Panc1 (cell line): ENCODE measurements at regions of chr9 and their contacts with region 1.

Region 1: DNA sequence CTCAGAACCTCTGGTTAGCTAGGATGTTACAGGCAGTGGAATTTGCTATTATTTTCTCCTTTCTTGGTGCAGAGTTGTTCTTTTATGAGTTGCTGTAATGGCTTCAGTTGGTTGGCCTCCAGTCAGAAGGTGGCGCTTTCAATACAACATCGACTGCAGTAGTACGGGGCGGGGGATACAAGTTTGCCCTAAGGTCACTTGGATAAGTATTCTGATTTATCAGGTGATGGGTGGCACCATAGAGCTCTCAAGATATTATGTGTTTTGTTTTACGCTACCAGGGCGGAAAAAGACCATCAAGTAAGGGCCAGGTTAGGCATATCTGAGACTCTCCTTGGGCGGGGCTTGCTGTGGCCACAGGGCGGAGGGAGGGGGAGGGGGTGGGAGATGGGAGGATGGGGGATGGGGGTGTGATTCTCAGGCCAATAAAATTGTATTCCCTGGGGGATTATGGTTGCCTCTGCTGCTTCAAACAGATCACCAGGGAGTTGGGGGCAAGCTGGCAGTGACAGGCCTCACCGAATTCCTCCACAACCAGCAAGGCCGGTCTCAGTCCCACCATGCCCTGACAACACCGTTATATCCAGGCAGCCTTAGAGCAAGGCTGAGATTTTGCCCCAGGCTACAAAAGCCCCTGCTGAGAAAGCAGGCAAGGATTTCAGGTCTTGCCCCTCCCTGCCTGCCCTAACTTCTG is 15.9 kb upstream of the RNF38 start:
- DNase-seq: no peak
- ATAC-seq: no peak
- H3K4me3 ChIP-seq: no peak overlapping the region
- H3K27ac ChIP-seq: no peak overlapping the region
- H3K4me1 ChIP-seq: peaks cover 24% of the 10 kb centered on the region
- H3K27me3 ChIP-seq: no peaks in the 10 kb centered on the region
- CTCF ChIP-seq: no peak

Region 2: DNA sequence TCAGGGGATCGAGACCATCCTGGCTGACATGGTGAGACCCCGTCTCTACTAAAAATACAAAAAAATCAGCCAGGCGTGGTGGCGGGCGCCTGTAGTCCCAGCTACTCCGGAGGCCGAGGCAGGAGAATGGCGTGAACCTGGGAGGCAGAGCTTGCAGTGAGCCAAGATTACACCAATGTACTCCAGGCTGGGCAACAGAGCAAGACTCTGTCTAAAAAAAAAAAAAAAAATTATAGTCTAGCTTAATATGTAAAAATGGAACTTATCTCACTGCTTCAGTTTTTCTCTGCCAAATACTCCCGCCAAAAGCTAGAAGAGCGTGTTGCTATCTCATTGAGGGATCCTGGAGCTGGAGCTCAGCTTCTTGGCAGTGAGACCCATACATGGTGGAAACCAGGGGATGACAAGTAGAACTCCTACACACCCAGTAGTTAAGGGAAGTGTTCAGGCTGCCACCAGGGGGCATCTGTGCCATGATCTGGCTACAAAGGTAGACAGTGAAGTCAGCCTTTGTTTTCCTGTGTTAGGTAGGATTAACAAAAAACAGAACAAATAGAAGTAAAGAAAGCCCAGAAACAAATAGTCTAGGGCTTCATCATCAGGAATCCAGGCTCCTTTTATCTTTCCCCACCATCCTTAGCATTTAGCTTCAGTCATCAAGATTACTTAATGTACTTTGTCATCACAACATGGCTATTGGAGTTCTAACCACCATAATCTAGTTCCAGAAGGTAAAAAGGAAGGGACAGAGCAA is 313.1 kb before region 1 on chr9:
- CTCF ChIA-PET with region 1: no interaction called
- POLR2A ChIA-PET with region 1: interaction called, 10 read pairs
- in situ Hi-C with region 1: no loop called
- intact Hi-C with region 1: no loop called
- DNase-seq: peak; percentile 69
- ATAC-seq: peak; percentile 95
- H3K4me3 ChIP-seq: no peak overlapping the region
- H3K27ac ChIP-seq: no peak overlapping the region
- H3K4me1 ChIP-seq: peaks cover 3% of the 10 kb centered on the region; the same call in 1 of the 2 replicates
- H3K27me3 ChIP-seq: no peaks in the 10 kb centered on the region
- CTCF ChIP-seq: peak; percentile 98

Region 3: GRCh38 chr9:36436909-36437308 is 20.9 kb after region 1 on chr9:
- CTCF ChIA-PET with region 1: interaction called, 3 read pairs
- POLR2A ChIA-PET with region 1: no interaction called
- in situ Hi-C with region 1: no loop called
- intact Hi-C with region 1: loop called (anchors 2 kb)
- DNase-seq: no peak
- ATAC-seq: no peak
- H3K4me3 ChIP-seq: no peak overlapping the region
- H3K27ac ChIP-seq: no peak overlapping the region
- H3K4me1 ChIP-seq: no peaks in the 10 kb centered on the region
- H3K27me3 ChIP-seq: no peaks in the 10 kb centered on the region
- CTCF ChIP-seq: no peak

Region 4: GRCh38 chr9:36566813-36567221 is 150.8 kb after region 1 on chr9:
- CTCF ChIA-PET with region 1: no interaction called
- POLR2A ChIA-PET with region 1: interaction called, 10 read pairs
- in situ Hi-C with region 1: no loop called
- intact Hi-C with region 1: no loop called
- DNase-seq: no peak
- ATAC-seq: peak; percentile 88
- H3K4me3 ChIP-seq: no peak overlapping the region
- H3K27ac ChIP-seq: peak overlapping the region; percentile 70
- H3K4me1 ChIP-seq: peaks cover 11% of the 10 kb centered on the region
- H3K27me3 ChIP-seq: no peaks in the 10 kb centered on the region
- CTCF ChIP-seq: no peak